Dorsolateral prefrontal cortex (tissue), 120 donors: ENCODE measurements at regions of chr1 and their contacts with region 1.

Region 1: DNA sequence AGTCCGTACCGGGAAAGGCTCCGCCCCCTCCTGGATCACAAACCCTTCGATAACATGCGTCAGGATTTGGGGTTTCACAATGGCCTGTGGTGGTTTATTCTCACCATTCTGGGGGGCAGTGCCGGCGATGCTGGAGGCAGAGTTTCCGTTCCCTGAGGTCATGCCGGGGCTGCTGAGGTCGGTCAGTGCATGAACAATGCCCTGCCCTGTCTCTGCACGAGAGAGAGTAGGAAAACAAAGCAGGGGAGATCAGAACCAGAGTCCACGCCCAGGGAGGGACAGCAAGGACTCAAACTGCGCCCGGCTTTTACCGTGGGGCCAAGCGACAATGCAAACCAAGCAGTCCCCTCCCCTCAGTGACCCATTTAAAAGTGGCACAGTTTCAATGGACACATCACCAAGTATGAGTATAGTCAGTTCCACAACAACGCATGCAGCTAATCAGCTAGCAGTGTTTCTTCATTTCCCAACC is 13.2 kb upstream of the A3GALT2 start:
- DNase-seq: peak in 4 of 10 donors; percentile 37 to 53 (median 44)
- H3K4me3 ChIP-seq: peak overlapping the region in 21 of 59 donors; percentile 0 to 37 (median 12)
- H3K27ac ChIP-seq: peak overlapping the region in 58 of 59 donors; percentile 7 to 99 (median 80)
- H3K27me3 ChIP-seq: no peaks in the 10 kb centered on the region
- CTCF ChIP-seq: no peak

Region 2: GRCh38 chr1:33295450-33296081 is 38.6 kb before region 1 on chr1:
- intact Hi-C with region 1: loop called in 1 of 2 experiments (anchors 5 kb)
- DNase-seq: peak; percentile 82 to 94 (median 91)
- H3K4me3 ChIP-seq: peak overlapping the region in 1 of 59 donors; percentile 14
- H3K27ac ChIP-seq: peak overlapping the region in 41 of 59 donors; percentile 0 to 72 (median 51)
- H3K27me3 ChIP-seq: no peaks in the 10 kb centered on the region
- CTCF ChIP-seq: peak; percentile 90 to 100 (median 96)